ENCODE measurements at regions of chr15 and their contacts with region 1.

Region 1: GRCh38 chr15:98177924-98178592 is 217.6 kb downstream of the ARRDC4 start:
- DNase-seq: peak; percentile 48 to 70
- ATAC-seq: peak; percentile 96 to 97
- H3K4me3 ChIP-seq: no peak overlapping the region
- H3K27ac ChIP-seq: no peak overlapping the region
- H3K4me1 ChIP-seq: no peaks in the 10 kb centered on the region
- CTCF ChIP-seq: peak; percentile 61
- EP300 ChIP-seq: no peak
- POLR2A ChIP-seq: no peak
- RAD21 ChIP-seq: peak; percentile 71 to 88

Region 2: GRCh38 chr15:97909291-97909891 is 268.7 kb before region 1 on chr15:
- CTCF ChIA-PET with region 1: interaction called, 16 read pairs
- POLR2A ChIA-PET with region 1: no interaction called
- DNase-seq: peak; percentile 33 to 59
- ATAC-seq: peak; percentile 84 to 98; a peak in 5 of 6 replicates
- H3K4me3 ChIP-seq: no peak overlapping the region
- H3K27ac ChIP-seq: no peak overlapping the region
- H3K4me1 ChIP-seq: no peaks in the 10 kb centered on the region
- CTCF ChIP-seq: peak; percentile 65
- EP300 ChIP-seq: no peak
- POLR2A ChIP-seq: no peak
- RAD21 ChIP-seq: peak; percentile 53 to 66

Region 3: DNA sequence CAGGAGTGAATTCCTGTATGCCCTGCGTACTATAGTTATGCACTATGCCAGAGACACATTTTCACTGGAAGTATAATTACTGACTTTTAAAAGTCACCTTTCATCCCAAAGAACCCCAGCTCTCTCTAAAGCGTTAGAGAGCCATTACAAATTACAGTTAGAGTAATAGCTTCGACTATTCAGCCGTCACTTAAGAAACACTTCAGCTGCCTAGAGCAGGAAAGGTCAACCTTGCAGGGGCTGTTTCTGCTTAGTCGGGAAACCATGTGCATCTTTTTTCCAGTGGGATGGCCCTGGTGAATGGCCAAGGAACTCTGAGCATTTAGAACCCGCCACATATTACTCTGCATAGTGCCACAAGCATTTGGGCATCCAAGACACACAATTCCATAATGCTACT is 18.3 kb after region 1 on chr15:
- CTCF ChIA-PET with region 1: interaction called, 14 read pairs
- POLR2A ChIA-PET with region 1: no interaction called
- DNase-seq: no peak
- ATAC-seq: no peak
- H3K4me3 ChIP-seq: no peak overlapping the region
- H3K27ac ChIP-seq: no peak overlapping the region
- H3K4me1 ChIP-seq: no peaks in the 10 kb centered on the region
- CTCF ChIP-seq: no peak
- EP300 ChIP-seq: no peak
- POLR2A ChIP-seq: no peak
- RAD21 ChIP-seq: no peak